HCT116 (cell line): ENCODE measurements at regions of chr5 and their contacts with region 1.

Region 1: GRCh38 chr5:69250598-69250997 is 15.9 kb downstream of the CDK7 start:
- DNase-seq: no peak
- ATAC-seq: no peak; the same call in 1 of the 2 replicates
- H3K4me3 ChIP-seq: no peak overlapping the region
- H3K27ac ChIP-seq: no peak overlapping the region
- H3K4me1 ChIP-seq: peaks cover 6 to 17% of the 10 kb centered on the region in 2 experiments
- H3K27me3 ChIP-seq: no peaks in the 10 kb centered on the region
- CTCF ChIP-seq: no peak
- POLR2A ChIP-seq: no peak
- RAD21 ChIP-seq: no peak

Region 2: GRCh38 chr5:69148586-69149360 is 101.8 kb before region 1 on chr5:
- CTCF ChIA-PET with region 1: no interaction called
- POLR2A ChIA-PET with region 1: no interaction called
- RAD21 ChIA-PET with region 1: no interaction called
- intact Hi-C with region 1: no loop called
- DNase-seq: no peak
- ATAC-seq: no peak
- H3K4me3 ChIP-seq: no peak overlapping the region
- H3K27ac ChIP-seq: no peak overlapping the region
- H3K4me1 ChIP-seq: no peaks in the 10 kb centered on the region
- H3K27me3 ChIP-seq: no peaks in the 10 kb centered on the region
- CTCF ChIP-seq: no peak
- POLR2A ChIP-seq: no peak
- RAD21 ChIP-seq: no peak

Region 3: GRCh38 chr5:69217548-69218526 is 32.8 kb before region 1 on chr5:
- CTCF ChIA-PET with region 1: no interaction called
- POLR2A ChIA-PET with region 1: no interaction called
- RAD21 ChIA-PET with region 1: no interaction called
- intact Hi-C with region 1: loop called (anchors 1 kb)
- DNase-seq: peak; percentile 83
- ATAC-seq: peak; percentile 93
- H3K4me3 ChIP-seq: peak overlapping the region; percentile 97
- H3K27ac ChIP-seq: peak overlapping the region; percentile 82
- H3K4me1 ChIP-seq: peaks cover 8 to 17% of the 10 kb centered on the region in 2 experiments; a peak in 3 of 4 replicates
- H3K27me3 ChIP-seq: no peaks in the 10 kb centered on the region
- CTCF ChIP-seq: peak in 1 of 3 experiments; percentile 15; a peak in 1 of 6 replicates
- POLR2A ChIP-seq: peak; percentile 48
- RAD21 ChIP-seq: no peak